ENCODE measurements at regions of chr17 and their contacts with region 1.

Region 1: GRCh38 chr17:42566883-42567573 is at the start of gene MLX:
- DNase-seq: peak; percentile 88 to 94 (median 90)
- H3K4me3 ChIP-seq: peak within 1 kb of the TSS; percentile 94 to 97 (median 97)
- H3K4me3 Mint-ChIP-seq: peak within 1 kb of the TSS; percentile 93 to 96
- H3K27ac ChIP-seq: peak within 1 kb of the TSS; percentile 84 to 94
- H3K27ac Mint-ChIP-seq: peak within 1 kb of the TSS; percentile 85 to 97 (median 95)
- H3K4me1 ChIP-seq: peaks cover 39 to 51% of the 10 kb centered on the region in 2 donors
- H3K4me1 Mint-ChIP-seq: peaks cover 36% of the 10 kb centered on the region
- H3K27me3 ChIP-seq: no peaks in the 10 kb centered on the region
- H3K27me3 Mint-ChIP-seq: peaks cover 0 to 1% (median 0%) of the 10 kb centered on the region in 3 donors
- CTCF ChIP-seq: no peak
- polyA plus RNA-seq, gene MLX: 61.4 to 106 (median 63.5) TPM

Region 2: DNA sequence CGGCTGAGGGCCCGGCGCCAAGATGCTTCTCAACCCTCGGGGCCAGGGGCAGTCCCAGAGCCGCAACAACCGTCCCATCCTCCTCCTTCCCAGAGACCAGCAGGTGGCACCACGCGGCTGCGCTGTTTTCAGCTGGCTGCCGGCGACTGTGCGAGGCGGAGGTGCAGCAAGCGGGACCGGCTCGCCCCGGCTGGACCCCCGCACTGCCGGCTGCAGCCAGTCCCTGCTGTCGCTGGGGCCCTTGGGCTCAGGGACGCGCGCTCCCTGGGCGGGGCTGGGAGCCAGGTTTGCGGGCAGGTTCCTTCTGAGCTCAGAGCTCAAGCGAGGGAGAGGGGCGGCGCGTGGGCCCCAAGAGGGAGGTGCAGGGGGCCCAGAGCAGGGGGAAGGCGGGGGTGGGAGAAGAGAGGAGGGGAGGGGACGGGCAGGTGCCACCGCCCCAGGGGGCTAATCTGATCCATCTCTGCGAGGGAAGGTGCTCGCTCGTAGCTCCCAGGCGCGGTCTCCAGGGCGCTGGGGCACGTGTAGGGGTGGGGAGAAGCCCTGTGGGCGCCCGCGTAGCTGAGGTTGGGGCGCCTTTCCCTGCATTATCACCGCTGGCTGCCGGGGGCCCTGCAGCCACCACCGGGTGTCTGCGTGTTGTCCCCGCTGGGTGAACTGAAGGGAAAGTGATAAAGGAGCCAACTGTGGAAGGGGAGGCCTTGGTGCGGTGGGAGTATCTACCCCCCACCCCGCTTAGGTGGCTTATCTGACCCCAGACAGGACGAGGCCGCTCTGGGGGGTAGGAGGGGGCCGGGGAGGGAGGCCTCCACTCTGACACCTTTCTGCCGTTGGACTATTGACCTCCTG is 254.5 kb before region 1 on chr17:
- intact Hi-C with region 1: no loop called
- DNase-seq: peak; percentile 46 to 68 (median 59)
- H3K4me3 ChIP-seq: peak overlapping the region in 1 of 3 experiments; percentile 44
- H3K4me3 Mint-ChIP-seq: peak overlapping the region; percentile 9 to 48
- H3K27ac ChIP-seq: peak overlapping the region in 1 of 2 donors; percentile 31
- H3K27ac Mint-ChIP-seq: peak overlapping the region in 5 of 7 donors; percentile 57 to 81 (median 75)
- H3K4me1 ChIP-seq: peaks cover 31 to 41% of the 10 kb centered on the region in 2 donors
- H3K4me1 Mint-ChIP-seq: peaks cover 41% of the 10 kb centered on the region
- H3K27me3 ChIP-seq: no peaks in the 10 kb centered on the region
- H3K27me3 Mint-ChIP-seq: peaks cover 1 to 2% (median 1%) of the 10 kb centered on the region in 3 donors
- CTCF ChIP-seq: peak; percentile 64

Region 3: DNA sequence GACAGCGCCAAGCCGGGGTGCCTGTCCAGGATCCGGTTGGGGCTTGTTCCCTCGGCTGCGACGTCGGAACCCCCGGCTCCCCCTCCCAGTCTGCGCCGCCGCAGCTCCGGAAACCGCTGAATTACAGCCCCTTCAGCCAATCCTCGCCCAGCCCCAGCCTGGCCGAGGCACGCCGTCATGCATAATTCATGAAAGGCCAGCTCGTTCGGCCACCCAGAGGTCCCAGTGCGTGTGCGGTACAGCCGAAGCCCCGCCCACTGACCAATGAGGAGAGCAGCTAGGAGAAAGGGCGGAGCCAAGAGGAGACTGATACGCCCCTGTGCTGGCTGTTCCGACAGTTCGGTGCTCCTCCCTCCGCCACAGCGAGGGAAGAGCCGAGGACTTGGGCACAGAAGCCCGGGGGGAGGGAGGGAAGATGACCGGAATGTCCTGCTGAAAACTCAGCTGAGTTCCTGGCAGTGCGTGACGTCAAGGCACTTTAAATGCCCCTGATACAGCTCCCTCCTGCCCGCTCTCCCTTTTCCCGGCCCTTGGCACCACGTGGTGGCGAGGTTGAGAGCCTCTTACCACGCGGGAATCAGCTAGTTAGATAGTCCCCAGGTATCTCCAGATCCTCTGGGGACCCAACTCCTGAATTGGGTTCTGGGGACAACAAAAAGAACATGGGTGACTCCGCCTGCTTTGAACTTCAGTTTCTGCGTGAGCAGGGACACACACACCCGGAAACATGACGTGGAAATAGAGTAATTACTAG is 178.5 kb before region 1 on chr17 and contains the start of gene STAT3:
- intact Hi-C with region 1: loop called in 1 of 2 experiments (anchors 1 kb)
- DNase-seq: peak; percentile 100
- H3K4me3 ChIP-seq: peak within 1 kb of the TSS; percentile 88 to 97 (median 93)
- H3K4me3 Mint-ChIP-seq: peak within 1 kb of the TSS; percentile 98
- H3K27ac ChIP-seq: peak within 1 kb of the TSS; percentile 98 to 100
- H3K27ac Mint-ChIP-seq: peak within 1 kb of the TSS; percentile 100
- H3K4me1 ChIP-seq: peaks cover 14 to 26% of the 10 kb centered on the region in 2 donors
- H3K4me1 Mint-ChIP-seq: peaks cover 35% of the 10 kb centered on the region
- H3K27me3 ChIP-seq: no peaks in the 10 kb centered on the region
- H3K27me3 Mint-ChIP-seq: peaks cover 0 to 2% (median 2%) of the 10 kb centered on the region in 3 donors
- CTCF ChIP-seq: no peak
- polyA plus RNA-seq, gene STAT3: 73.0 to 155 (median 110) TPM

Region 4: DNA sequence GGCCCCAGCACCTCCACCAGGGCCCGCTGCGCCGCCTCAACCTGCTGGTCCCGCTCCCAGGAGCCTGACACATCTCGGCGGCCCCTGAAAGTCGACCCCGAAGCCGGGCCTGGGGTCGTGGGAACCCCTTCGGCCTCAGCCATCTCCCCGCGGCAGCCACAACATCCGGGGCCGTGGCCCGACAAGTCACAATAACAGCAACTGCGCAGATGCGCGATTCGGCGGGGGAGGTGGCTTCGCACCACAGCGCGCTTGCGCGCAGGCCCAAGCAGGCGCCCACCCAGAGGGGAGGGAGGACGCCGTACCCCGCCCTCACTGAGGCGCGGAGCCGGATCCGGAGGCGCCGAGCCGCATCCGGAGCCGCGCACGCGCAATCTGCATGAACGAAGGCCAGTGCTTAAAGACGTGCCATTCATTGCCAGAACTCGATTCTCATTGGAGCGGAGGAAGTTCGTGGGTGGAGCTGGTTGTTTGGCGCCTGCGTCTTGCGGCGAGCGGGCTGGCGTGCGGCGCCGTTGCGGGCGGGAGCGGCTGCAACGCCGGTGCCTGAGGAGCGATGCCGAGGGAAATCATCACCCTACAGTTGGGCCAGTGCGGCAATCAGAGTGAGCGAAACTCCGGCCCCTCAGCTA is 42.3 kb after region 1 on chr17 and contains the starts of genes RETREG3 and TUBG1:
- intact Hi-C with region 1: loop called in 1 of 2 experiments (anchors 5 kb)
- DNase-seq: peak; percentile 99 to 100 (median 99)
- H3K4me3 ChIP-seq: peak within 1 kb of the TSS; percentile 80 to 98 (median 92)
- H3K4me3 Mint-ChIP-seq: peak within 1 kb of the TSS; percentile 100
- H3K27ac ChIP-seq: peak within 1 kb of the TSS; percentile 72 to 90
- H3K27ac Mint-ChIP-seq: peak within 1 kb of the TSS; percentile 84 to 96 (median 95)
- H3K4me1 ChIP-seq: peaks cover 21 to 32% of the 10 kb centered on the region in 2 donors
- H3K4me1 Mint-ChIP-seq: peaks cover 31% of the 10 kb centered on the region
- H3K27me3 ChIP-seq: no peaks in the 10 kb centered on the region
- H3K27me3 Mint-ChIP-seq: peaks cover 0 to 3% (median 0%) of the 10 kb centered on the region in 3 donors
- CTCF ChIP-seq: peak; percentile 20
- polyA plus RNA-seq, gene RETREG3: 34.0 to 69.9 (median 69.9) TPM
- polyA plus RNA-seq, gene TUBG1: 7.5 to 17.4 (median 10.2) TPM

Region 5: DNA sequence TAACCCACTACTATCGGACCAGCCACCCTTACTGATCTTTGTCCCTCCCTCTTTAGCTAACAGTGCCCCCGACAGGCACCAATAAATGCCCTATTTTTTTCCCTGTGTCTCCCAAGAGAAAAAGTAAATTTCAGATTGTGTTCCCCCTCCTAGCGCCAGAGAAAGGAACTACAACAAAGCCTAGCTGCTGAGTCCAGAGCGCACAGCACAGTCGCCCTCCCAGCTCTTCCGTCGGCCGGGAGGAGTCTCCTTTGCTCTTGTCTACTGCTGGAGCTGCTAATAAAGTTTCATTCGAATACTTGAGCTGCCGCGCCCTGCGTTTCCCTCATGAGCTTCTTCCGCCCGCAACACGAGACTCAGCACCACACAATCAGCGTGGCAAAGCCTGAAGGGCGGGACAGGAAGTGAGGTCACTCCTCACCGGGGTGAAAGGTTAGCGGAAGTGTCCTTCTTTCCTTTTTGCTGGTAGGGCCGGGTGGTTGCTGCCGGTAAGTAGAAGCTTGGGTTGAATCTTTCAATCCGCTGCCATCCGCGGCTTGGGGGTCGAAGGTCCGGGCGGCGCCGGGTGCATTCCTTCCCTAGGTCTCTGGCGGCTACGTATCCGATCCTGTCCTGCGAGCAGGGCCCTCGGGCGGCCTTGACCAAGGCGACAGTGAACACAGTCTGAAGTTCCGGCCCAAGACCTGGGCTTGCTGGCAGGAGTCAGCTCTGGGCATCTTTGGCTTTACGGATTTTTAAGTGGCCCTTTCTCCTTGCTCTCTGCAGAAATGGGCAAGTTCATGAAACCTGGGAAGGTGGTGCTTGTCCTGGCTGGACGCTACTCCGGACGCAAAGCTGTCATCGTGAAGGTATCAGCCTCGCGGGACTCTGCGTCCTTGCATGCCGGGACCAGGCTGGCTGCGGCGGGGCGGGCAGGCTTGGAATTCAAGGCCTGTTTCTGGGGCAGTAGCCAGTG is 431.2 kb after region 1 on chr17 and contains the start of gene RPL27:
- intact Hi-C with region 1: loop called in 1 of 2 experiments (anchors 5 kb)
- DNase-seq: peak; percentile 99 to 100 (median 99)
- H3K4me3 ChIP-seq: peak within 1 kb of the TSS; percentile 71 to 99 (median 76)
- H3K4me3 Mint-ChIP-seq: peak within 1 kb of the TSS; percentile 91 to 99
- H3K27ac ChIP-seq: peak within 1 kb of the TSS; percentile 94 to 99
- H3K27ac Mint-ChIP-seq: peak within 1 kb of the TSS; percentile 96 to 99 (median 99)
- H3K4me1 ChIP-seq: peaks cover 47 to 50% of the 10 kb centered on the region in 2 donors
- H3K4me1 Mint-ChIP-seq: peaks cover 45% of the 10 kb centered on the region
- H3K27me3 ChIP-seq: no peaks in the 10 kb centered on the region
- H3K27me3 Mint-ChIP-seq: peaks cover 0 to 3% (median 0%) of the 10 kb centered on the region in 3 donors
- CTCF ChIP-seq: peak; percentile 95
- polyA plus RNA-seq, gene RPL27: 1,073 to 2,156 (median 1,232) TPM

Measured in CD14-positive monocyte (primary cell).